HepG2 (cell line): ENCODE measurements at regions of chr14 and their contacts with region 1.

Region 1: DNA sequence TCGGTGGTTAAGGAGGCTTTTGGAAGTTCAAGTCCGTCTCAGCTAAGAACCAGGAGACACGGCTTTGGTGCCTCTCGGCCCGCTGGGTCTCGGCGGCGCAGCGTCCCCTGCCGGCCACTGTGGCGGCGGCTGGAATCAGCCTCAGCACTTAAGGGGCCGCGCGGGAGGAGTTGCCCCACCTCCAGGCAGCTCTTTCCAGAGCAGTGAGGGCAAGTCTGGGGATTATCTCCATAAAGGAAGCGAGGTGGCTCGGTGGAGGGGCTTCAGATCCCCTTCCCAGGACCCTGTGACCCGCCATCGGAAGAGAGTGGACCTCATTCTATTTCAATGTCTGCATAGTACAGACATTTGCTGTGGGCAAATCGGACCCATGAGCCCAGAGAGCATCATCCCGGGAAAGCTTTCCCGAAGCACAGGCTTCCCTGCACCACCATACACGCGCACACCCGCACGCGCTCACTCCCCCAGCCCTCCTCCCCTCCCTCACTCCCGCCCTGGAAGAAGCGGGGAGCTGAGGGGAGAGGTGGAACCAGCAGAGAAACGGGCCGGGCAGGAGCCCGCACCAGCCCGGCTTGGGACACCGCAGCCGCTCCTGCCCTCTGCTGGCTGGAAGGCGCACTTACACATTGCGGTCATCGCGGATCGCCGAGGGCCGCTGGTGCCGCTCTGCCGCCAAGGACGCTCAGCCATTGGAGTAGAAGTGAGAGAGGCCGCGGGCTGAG is 15.9 kb downstream of the RNASE2 start:
- DNase-seq: peak; percentile 80
- ATAC-seq: peak; percentile 93
- H3K4me3 ChIP-seq: peak overlapping the region; percentile 54 to 80 (median 80)
- H3K27ac ChIP-seq: no peak overlapping the region
- H3K4me1 ChIP-seq: peaks cover 36% of the 10 kb centered on the region
- H3K27me3 ChIP-seq: peaks cover 0 to 23% of the 10 kb centered on the region in 2 experiments; a peak in 3 of 5 replicates
- CTCF ChIP-seq: peak; percentile 97
- EP300 ChIP-seq: 0 out of 4 replicates have a peak, but pooled peaks of 1 of the 2 experiments have one; percentile 9
- POLR2A ChIP-seq: 0 out of 4 replicates have a peak, but pooled peaks of 1 of the 2 experiments have one; percentile 0
- RAD21 ChIP-seq: peak; percentile 81

Region 2: DNA sequence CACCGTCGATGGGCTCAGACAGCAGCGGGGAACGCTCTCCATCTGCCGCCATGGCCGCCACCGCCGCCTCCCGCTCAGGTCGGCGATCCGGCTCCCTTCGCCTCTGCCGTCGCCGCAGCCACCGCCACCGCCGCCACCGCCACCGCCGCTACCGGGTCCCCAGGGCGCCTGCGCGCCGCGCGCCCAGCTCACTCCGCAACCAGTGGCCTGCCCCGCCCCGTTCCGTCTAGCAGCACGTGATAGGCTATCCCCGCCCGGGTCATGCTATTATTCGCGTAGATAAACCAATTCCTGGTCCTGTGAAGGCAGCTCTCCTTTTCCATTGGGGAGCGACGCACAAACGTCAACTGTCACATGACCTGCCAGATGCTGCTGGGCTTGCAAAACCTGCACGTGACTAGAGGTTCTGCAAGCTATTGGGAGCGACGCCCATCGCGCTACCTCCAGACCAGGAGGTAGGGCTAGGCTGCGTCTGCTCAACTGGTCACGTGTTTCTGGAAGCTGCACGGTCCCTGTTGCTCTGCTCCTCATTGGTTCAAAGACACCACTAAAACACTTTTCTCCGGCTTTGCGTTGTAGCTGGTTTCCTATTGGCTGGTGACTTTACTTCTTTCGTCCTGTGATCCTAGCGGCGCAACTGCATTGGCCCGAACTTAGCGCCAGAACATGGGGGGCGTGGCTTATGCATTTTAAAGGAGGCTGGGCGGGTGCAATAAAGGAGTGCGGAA is 509.7 kb before region 1 on chr14 and contains the start of gene PIP4P1:
- CTCF ChIA-PET with region 1: no interaction called
- POLR2A ChIA-PET with region 1: no interaction called
- in situ Hi-C with region 1: loop called (anchors 10 kb)
- intact Hi-C with region 1: no loop called
- DNase-seq: peak; percentile 100
- ATAC-seq: peak; percentile 97
- H3K4me3 ChIP-seq: peak within 1 kb of the TSS; percentile 67 to 89 (median 78)
- H3K27ac ChIP-seq: peak within 1 kb of the TSS; percentile 80
- H3K4me1 ChIP-seq: peaks cover 56% of the 10 kb centered on the region
- H3K27me3 ChIP-seq: no peaks in the 10 kb centered on the region; a peak in 1 of 5 replicates
- CTCF ChIP-seq: no peak; the same call in 1 of the 2 replicates
- EP300 ChIP-seq: peak; percentile 25 to 56; a peak in 3 of 4 replicates
- POLR2A ChIP-seq: peak in 1 of 2 experiments; percentile 85; a peak in 3 of 4 replicates
- RAD21 ChIP-seq: peak; percentile 51
- total RNA-seq, gene PIP4P1: 31.9 and 33.4 TPM in 2 replicates

Region 3: GRCh38 chr14:20714593-20715250 is 256.4 kb before region 1 on chr14:
- CTCF ChIA-PET with region 1: no interaction called
- POLR2A ChIA-PET with region 1: no interaction called
- in situ Hi-C with region 1: no loop called
- intact Hi-C with region 1: no loop called
- DNase-seq: no peak
- ATAC-seq: no peak
- H3K4me3 ChIP-seq: no peak overlapping the region
- H3K27ac ChIP-seq: no peak overlapping the region
- H3K4me1 ChIP-seq: no peaks in the 10 kb centered on the region
- H3K27me3 ChIP-seq: no peaks in the 10 kb centered on the region
- CTCF ChIP-seq: no peak
- EP300 ChIP-seq: no peak
- POLR2A ChIP-seq: no peak
- RAD21 ChIP-seq: no peak